ENCODE measurements at regions of chr13 and their contacts with region 1.

Region 1: DNA sequence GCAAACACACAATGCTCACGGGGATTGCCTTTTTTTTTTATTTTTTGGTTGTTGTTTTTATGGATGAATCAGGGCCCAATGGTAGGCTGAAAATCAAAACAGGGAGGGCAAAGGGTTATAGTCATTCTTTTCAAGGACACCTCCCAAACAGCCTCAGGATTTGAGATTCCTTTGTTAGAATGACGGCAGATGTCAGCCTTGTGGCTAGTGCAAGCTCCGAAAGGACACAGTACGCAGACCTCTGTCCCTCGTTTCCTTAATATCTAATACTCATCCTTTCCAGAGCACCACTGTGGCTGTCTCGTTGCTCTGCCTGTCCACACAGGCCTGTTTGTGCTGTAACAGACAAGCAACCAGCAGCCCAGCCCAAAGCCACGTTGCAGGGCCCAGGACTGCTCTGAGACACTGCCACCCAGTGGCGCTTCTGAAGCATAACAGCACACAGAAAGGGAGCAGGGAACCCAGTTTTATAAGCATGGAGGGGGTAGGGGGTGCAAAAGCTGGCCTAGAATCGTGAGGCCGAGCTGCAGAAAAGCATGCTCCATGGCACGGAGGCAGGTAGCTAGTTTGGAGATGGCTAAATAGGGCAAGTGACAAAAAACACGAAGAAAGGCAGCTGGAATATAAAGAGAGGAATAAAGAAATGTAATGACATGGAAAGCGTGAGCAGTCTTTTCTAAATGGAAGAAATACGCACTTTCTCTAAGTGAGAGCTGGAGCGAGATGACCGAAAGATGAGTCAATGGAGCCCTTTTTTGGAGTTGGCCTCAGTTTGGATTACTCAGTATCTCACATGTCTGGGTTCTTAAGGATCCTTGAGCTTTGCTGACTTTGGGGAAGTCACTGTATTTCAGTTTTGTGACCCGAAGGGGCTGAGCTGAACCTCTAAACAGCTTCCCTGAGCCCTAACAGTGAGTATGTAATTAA is 40.7 kb upstream of the MEDAG start:
- DNase-seq: peak; percentile 86
- H3K4me3 ChIP-seq: peak overlapping the region; percentile 21
- CTCF ChIP-seq: peak; percentile 91

Region 2: DNA sequence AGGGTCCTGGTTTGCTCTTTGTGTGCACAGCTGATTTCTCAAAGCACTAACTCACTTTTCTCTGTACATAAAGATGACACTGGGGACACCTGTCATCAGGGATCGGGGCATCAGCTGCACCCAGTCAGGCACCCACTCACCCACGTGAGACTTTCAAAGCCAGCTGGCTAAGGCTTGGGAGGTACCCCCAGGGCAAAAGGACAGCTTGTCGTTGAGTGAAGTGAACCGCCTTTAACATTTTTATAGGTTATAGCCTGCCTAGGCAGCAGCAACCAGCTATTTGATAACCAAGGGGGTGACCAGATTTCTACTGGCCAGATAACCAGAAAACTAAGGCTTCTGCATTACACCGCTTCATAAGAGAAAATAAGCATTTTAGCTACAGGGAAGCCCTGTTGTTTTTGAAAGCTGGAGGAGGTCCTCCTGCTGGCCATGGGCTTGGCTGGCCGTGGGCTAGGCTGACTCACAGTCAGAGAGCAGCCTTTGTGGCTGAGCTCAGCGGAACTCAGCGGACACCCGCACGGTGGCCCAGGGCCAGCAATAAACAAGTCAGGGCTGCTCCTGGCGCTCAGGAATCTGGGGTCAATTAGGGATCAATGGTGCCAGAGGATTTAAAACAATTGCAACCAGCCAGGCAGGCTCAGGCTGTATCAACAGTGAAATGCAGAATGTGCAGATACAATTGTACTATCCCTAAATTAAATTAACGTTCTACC is 72.9 kb before region 1 on chr13:
- CTCF ChIA-PET with region 1: interaction called, 10 read pairs
- POLR2A ChIA-PET with region 1: interaction called, 5 read pairs
- DNase-seq: peak; percentile 69
- H3K4me3 ChIP-seq: no peak overlapping the region
- CTCF ChIP-seq: peak; percentile 68

Region 3: DNA sequence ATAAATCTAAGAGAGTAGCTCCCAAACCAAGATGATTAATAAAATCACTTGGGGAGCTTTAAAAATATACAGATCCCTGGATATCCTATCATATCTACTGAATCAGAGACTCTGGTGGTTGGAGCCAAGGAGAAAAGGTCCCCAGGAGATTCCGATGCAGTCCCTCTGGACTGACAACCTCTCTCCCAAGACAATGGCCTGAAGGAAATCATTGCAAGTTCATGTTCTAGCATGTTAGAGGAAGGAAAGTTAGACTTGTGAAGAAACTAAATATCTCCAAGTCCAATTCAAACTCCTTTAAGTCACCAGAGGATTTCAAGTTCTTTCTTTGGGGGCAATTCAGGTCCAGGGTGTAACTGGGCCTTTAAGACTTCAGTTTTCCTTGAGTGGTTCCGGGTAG is 44.0 kb before region 1 on chr13:
- CTCF ChIA-PET with region 1: interaction called, 12 read pairs
- POLR2A ChIA-PET with region 1: no interaction called
- DNase-seq: no peak
- H3K4me3 ChIP-seq: no peak overlapping the region
- CTCF ChIP-seq: no peak

Region 4: DNA sequence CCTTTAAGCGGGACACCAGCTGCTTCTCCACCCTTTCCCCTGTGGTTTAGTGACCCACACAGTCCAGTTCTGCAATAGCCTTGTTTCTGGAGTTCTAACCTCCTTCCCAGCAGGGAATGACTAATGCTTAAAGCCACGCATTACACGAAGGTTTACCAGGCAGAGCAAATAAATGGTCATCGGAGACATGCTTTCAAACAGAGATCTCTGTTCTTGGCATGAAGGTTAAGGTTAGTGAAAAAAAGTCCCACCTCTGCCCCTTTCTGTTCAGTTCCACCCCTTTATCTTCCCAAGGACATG is 15.4 kb after region 1 on chr13:
- CTCF ChIA-PET with region 1: interaction called, 21 read pairs
- POLR2A ChIA-PET with region 1: interaction called, 8 read pairs
- DNase-seq: peak; percentile 82
- H3K4me3 ChIP-seq: no peak overlapping the region
- CTCF ChIP-seq: no peak

Region 5: GRCh38 chr13:31044377-31045285 is 179.2 kb after region 1 on chr13:
- CTCF ChIA-PET with region 1: interaction called, 47 read pairs
- POLR2A ChIA-PET with region 1: interaction called, 3 read pairs
- DNase-seq: no peak
- H3K4me3 ChIP-seq: no peak overlapping the region
- CTCF ChIP-seq: peak; percentile 94